CD8-positive, alpha-beta memory T cell (primary cell): ENCODE measurements at regions of chr6 and their contacts with region 1.

Region 1: GRCh38 chr6:14066782-14067406 is 50.7 kb upstream of the CD83 start:
- DNase-seq: peak in 2 of 5 donors; percentile 37 to 43
- H3K4me3 ChIP-seq: no peak overlapping the region
- H3K4me3 Mint-ChIP-seq: no peak overlapping the region
- H3K27ac ChIP-seq: no peak overlapping the region
- H3K27ac Mint-ChIP-seq: peak overlapping the region in 1 of 8 donors; percentile 69
- H3K4me1 ChIP-seq: no peaks in the 10 kb centered on the region
- H3K4me1 Mint-ChIP-seq: peaks cover 0 to 2% (median 0%) of the 10 kb centered on the region in 3 donors
- H3K27me3 ChIP-seq: no peaks in the 10 kb centered on the region
- H3K27me3 Mint-ChIP-seq: peaks cover 8 to 31% of the 10 kb centered on the region in 2 donors

Region 2: GRCh38 chr6:13795041-13795750 is 271.7 kb before region 1 on chr6:
- CTCF ChIA-PET with region 1: interaction called, 11 read pairs
- POLR2A ChIA-PET with region 1: no interaction called
- DNase-seq: peak; percentile 53 to 86 (median 65)
- H3K4me3 ChIP-seq: no peak overlapping the region
- H3K4me3 Mint-ChIP-seq: no peak overlapping the region
- H3K27ac ChIP-seq: no peak overlapping the region
- H3K27ac Mint-ChIP-seq: peak overlapping the region in 5 of 8 donors; percentile 8 to 56 (median 33)
- H3K4me1 ChIP-seq: no peaks in the 10 kb centered on the region
- H3K4me1 Mint-ChIP-seq: peaks cover 5 to 9% (median 7%) of the 10 kb centered on the region in 3 donors
- H3K27me3 ChIP-seq: no peaks in the 10 kb centered on the region
- H3K27me3 Mint-ChIP-seq: no peaks in the 10 kb centered on the region

Region 3: GRCh38 chr6:13908955-13909381 is 157.9 kb before region 1 on chr6:
- CTCF ChIA-PET with region 1: interaction called, 11 read pairs
- POLR2A ChIA-PET with region 1: no interaction called
- DNase-seq: peak in 4 of 5 donors; percentile 22 to 60 (median 43)
- H3K4me3 ChIP-seq: no peak overlapping the region
- H3K4me3 Mint-ChIP-seq: no peak overlapping the region
- H3K27ac ChIP-seq: no peak overlapping the region
- H3K27ac Mint-ChIP-seq: no peak overlapping the region
- H3K4me1 ChIP-seq: no peaks in the 10 kb centered on the region
- H3K4me1 Mint-ChIP-seq: peaks cover 0 to 5% (median 0%) of the 10 kb centered on the region in 3 donors
- H3K27me3 ChIP-seq: peaks cover 3% of the 10 kb centered on the region
- H3K27me3 Mint-ChIP-seq: peaks cover 10 to 36% of the 10 kb centered on the region in 2 donors

Region 4: GRCh38 chr6:14046476-14047068 is 20.3 kb before region 1 on chr6:
- CTCF ChIA-PET with region 1: interaction called, 11 read pairs
- POLR2A ChIA-PET with region 1: no interaction called
- DNase-seq: peak in 4 of 5 donors; percentile 5 to 55 (median 8)
- H3K4me3 ChIP-seq: no peak overlapping the region
- H3K4me3 Mint-ChIP-seq: no peak overlapping the region
- H3K27ac ChIP-seq: no peak overlapping the region
- H3K27ac Mint-ChIP-seq: no peak overlapping the region
- H3K4me1 ChIP-seq: no peaks in the 10 kb centered on the region
- H3K4me1 Mint-ChIP-seq: peaks cover 0 to 3% (median 1%) of the 10 kb centered on the region in 3 donors
- H3K27me3 ChIP-seq: no peaks in the 10 kb centered on the region
- H3K27me3 Mint-ChIP-seq: peaks cover 15 to 65% of the 10 kb centered on the region in 2 donors